ENCODE measurements at regions of chr1 and their contacts with region 1.

Region 1: DNA sequence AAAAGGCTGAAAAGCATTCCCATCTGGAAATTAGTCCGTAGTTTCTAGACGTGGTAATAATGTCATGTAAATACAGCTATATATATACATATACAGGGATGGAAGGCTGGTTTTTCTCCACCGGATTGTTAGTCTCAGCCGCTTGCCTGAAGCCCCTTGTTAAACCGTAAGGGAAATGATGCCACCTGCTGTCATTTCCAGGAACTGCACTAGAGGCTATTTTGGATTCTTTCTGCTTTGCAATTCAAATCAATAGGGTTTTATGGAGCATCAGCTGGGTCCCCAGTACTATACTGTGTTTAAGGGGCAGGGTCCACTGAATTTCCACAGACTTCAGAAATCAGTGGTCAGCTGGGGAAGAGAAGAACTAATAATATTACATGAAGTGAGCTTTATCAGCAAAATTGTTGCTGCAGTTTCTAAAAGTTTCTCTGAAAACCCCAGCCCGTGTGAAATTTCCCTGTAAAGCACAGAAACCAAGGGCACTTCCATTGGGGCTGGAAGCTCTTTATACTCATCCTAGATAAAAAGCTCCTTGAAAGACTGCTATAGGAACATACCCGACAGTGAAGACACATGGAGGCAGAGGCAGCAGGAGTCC is 33.8 kb upstream of the MPZL1 start:
- DNase-seq: peak; percentile 65 to 84
- H3K4me3 ChIP-seq: no peak overlapping the region
- H3K27ac ChIP-seq: no peak overlapping the region
- H3K4me1 ChIP-seq: no peaks in the 10 kb centered on the region
- H3K27me3 ChIP-seq: no peaks in the 10 kb centered on the region
- CTCF ChIP-seq: peak; percentile 92 to 95 (median 94)
- POLR2A ChIP-seq: no peak

Region 2: GRCh38 chr1:167563579-167564246 is 124.3 kb before region 1 on chr1:
- intact Hi-C with region 1: loop called (anchors 10 kb)
- DNase-seq: no peak
- H3K4me3 ChIP-seq: no peak overlapping the region
- H3K27ac ChIP-seq: no peak overlapping the region
- H3K4me1 ChIP-seq: no peaks in the 10 kb centered on the region
- H3K27me3 ChIP-seq: no peaks in the 10 kb centered on the region
- CTCF ChIP-seq: no peak
- POLR2A ChIP-seq: no peak

Region 3: GRCh38 chr1:167599957-167600581 is 88.0 kb before region 1 on chr1:
- intact Hi-C with region 1: loop called (anchors 10 kb)
- DNase-seq: peak in 1 of 2 donors; percentile 42
- H3K4me3 ChIP-seq: no peak overlapping the region
- H3K27ac ChIP-seq: no peak overlapping the region
- H3K4me1 ChIP-seq: no peaks in the 10 kb centered on the region
- H3K27me3 ChIP-seq: no peaks in the 10 kb centered on the region
- CTCF ChIP-seq: peak; percentile 31 to 70 (median 65)
- POLR2A ChIP-seq: no peak

Region 4: DNA sequence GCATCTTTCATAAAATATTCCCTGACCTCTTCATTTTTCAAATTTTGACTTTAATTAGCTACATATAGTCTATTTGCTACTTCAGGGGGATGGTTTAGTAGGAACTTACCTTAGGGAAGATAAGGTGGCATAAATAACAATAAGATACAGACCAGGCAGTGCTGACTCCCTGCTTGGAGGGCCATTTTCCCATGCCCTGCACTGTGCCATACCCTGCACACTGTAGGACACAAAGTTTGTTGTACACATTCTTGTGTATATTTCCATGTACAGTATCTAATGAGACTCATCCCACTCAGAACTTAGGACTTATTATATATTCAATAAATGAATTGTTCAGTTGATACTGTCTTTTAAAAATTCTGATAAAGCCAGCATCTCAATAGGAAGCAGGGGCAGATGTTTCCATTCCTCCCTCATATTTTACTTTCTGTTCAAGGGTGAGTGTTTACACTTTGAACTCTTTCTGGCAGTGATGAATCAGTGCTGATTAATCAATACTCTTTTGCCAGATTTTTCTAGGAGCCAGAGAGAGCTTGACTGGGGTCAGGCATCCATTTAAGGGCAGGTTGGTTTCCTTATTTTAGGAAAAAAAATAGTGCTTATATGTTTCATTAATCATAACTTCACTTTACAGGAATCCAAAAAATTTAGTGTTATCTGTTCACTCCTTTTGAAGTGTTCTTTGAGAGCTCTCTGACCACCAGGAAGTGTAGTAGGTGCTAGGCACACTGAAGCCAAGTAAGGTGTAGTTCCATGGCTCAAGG is 64.4 kb after region 1 on chr1:
- intact Hi-C with region 1: no loop called
- DNase-seq: no peak
- H3K4me3 ChIP-seq: no peak overlapping the region
- H3K27ac ChIP-seq: no peak overlapping the region
- H3K4me1 ChIP-seq: peaks cover 0 to 3% of the 10 kb centered on the region in 2 donors
- H3K27me3 ChIP-seq: no peaks in the 10 kb centered on the region
- CTCF ChIP-seq: no peak
- POLR2A ChIP-seq: no peak

Region 5: GRCh38 chr1:168054117-168054516 is 366.1 kb after region 1 on chr1:
- intact Hi-C with region 1: no loop called
- DNase-seq: no peak
- H3K4me3 ChIP-seq: no peak overlapping the region
- H3K27ac ChIP-seq: no peak overlapping the region
- H3K4me1 ChIP-seq: no peaks in the 10 kb centered on the region
- H3K27me3 ChIP-seq: no peaks in the 10 kb centered on the region
- CTCF ChIP-seq: no peak
- POLR2A ChIP-seq: no peak

Measured in uterus (tissue), 4 donors.